Posterior cingulate gyrus (tissue), 11 donors: ENCODE measurements at regions of chr2 and their contacts with region 1.

Region 1: DNA sequence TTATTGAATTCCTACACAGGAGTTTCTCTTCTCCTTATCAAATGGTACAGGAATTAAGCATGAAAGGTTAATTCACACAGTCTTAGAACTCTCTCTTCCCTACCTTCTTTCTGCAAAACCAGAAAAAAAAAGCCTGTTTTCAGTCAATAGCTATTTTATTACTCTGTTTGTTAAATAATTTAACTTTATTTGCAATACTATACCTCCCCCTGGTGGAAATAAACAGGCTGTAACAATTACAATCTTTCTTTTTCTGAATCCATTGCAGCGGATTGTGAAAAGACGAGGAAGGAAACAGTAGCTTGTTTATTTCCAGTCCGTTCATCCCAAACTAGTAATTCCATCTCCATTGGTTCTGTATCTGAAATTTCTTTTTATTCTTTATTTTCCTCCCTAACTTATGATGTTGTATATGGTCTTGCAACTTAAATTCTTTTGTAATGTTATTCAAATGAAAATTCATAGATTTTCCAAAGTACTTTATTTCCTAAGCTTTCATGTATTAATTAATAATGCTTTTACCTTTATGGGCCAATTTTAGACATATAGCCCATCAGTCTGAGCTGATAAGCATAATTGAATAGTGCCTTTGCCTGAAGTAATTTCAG is 165.2 kb downstream of the SH3BP4 start:
- DNase-seq: no peak

Region 2: DNA sequence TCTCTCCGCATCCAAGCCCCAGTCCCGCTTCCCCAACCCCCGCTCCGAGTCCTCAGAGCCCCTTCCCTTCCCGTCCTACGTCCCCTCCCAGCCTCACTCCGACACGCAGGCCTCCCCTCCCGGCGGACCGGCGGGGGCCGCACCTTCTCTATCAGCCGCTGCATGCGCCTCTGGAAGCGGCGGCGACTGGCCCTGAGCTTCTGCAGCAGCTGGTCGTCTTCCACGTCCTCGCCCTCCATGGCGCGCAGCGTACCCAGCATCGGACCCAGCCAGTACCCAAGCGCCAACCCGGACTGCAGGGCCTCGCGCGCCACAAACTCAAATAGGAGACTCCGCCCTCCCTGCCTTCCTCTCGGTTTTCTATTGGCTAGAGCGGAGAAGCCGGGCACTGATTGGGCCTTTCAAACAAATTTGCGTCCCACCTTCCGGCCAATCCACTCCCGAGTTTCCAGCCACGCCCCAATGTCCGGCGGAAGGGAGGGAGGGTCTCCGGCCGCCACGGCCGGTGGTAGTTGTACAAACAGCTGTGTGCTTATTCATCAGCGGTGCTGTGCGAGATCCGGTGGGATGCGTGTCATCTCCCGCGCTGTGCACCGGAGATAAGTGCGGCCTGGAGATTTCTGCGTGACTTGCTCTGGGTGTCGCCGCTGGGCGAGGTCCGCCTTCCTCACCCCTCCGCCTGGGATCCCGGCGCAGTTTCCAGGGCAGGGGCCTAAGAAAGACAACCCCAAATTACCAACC is 1262.6 kb before region 1 on chr2 and contains the start of gene HJURP:
- intact Hi-C with region 1: loop called (anchors 10 kb)
- DNase-seq: peak; percentile 85 to 99 (median 94)

Region 3: GRCh38 chr2:233976690-233977294 is 1140.2 kb before region 1 on chr2:
- intact Hi-C with region 1: loop called (anchors 5 kb)
- DNase-seq: no peak

Region 4: DNA sequence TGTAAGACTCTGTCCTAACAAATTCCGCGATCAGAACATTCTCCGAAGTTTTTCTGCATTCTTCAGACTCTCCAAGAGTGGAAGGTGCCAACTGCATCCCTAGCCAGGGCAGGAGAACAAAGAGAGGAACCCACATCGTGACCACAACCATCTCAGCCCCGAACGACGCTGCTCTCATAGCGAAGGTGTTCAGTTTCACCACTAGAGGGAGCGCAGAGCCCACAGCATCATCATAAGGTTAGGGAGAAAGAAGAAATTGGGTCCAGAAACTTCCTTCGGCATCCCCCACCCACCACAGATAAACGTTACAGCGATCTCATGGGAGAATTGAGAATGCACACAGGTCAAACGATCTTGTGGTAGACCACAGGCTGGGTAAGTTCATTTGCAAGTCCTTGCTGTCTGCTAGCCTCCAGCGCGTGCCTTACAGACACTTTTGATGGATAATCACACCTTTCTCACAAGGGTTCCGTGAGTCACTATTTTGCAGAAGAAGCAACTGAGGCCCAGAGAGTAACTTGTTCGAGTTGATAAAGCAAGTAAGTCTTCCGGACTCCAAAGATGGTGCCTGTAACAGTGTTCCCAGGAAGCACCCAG is 566.4 kb before region 1 on chr2:
- intact Hi-C with region 1: loop called (anchors 1 kb)
- DNase-seq: peak in 9 of 10 donors; percentile 21 to 94 (median 68)

Region 5: GRCh38 chr2:234905547-234906265 is 211.3 kb before region 1 on chr2:
- intact Hi-C with region 1: no loop called
- DNase-seq: no peak

Region 6: DNA sequence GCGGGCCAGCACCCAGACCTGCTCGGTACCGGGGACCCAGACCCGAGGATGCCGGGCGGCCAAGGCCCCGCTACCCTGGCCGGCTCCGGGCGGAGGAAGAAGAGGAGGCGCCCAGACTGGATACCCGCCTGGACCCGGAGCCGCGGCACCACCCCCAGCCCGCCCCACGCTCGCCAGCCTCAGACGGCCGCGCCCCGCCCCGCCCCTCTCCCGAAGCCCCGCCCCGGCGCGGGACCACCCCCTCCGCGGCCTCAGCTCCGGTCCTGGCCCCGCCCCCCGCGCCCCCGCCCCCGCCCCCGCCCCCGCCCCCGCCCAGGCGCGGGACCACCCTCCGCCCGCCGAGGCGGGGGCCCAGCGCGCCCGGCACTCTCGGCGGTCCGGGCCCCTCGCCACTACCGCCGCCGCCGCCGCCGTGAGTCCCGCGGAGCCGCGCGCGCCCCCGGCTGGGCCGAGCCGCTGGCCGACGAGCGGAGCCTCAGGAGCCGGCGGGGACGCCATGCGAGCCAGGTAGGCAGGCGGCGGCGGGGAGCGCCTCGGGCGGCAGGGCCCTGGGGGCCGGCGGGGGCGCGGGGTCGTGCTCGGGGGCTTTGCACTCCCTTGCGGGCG is 165.2 kb before region 1 on chr2 and contains the start of gene SH3BP4:
- intact Hi-C with region 1: no loop called
- DNase-seq: peak; percentile 70 to 97 (median 75)